ENCODE measurements at regions of chr6 and their contacts with region 1.

Region 1: GRCh38 chr6:94636780-94637385 is 940.5 kb upstream of the MANEA start:
- DNase-seq: peak; percentile 32
- H3K4me3 ChIP-seq: no peak overlapping the region
- H3K27ac ChIP-seq: no peak overlapping the region
- H3K4me1 ChIP-seq: no peaks in the 10 kb centered on the region
- H3K27me3 ChIP-seq: no peaks in the 10 kb centered on the region
- CTCF ChIP-seq: peak; percentile 50 to 57

Region 2: GRCh38 chr6:94698773-94699172 is 61.9 kb after region 1 on chr6:
- CTCF ChIA-PET with region 1: no interaction called
- dilution Hi-C with region 1: no loop called
- in situ Hi-C with region 1: no loop called
- intact Hi-C with region 1: no loop called
- DNase-seq: no peak
- H3K4me3 ChIP-seq: no peak overlapping the region
- H3K27ac ChIP-seq: no peak overlapping the region
- H3K4me1 ChIP-seq: no peaks in the 10 kb centered on the region
- H3K27me3 ChIP-seq: no peaks in the 10 kb centered on the region
- CTCF ChIP-seq: no peak

Region 3: GRCh38 chr6:95091823-95092436 is 455.0 kb after region 1 on chr6:
- CTCF ChIA-PET with region 1: no interaction called
- dilution Hi-C with region 1: no loop called
- in situ Hi-C with region 1: no loop called
- intact Hi-C with region 1: loop called (anchors 1 kb)
- DNase-seq: peak; percentile 48
- H3K4me3 ChIP-seq: no peak overlapping the region
- H3K27ac ChIP-seq: peak overlapping the region; percentile 50
- H3K4me1 ChIP-seq: peaks cover 31% of the 10 kb centered on the region
- H3K27me3 ChIP-seq: no peaks in the 10 kb centered on the region
- CTCF ChIP-seq: peak; percentile 58 to 59

Region 4: DNA sequence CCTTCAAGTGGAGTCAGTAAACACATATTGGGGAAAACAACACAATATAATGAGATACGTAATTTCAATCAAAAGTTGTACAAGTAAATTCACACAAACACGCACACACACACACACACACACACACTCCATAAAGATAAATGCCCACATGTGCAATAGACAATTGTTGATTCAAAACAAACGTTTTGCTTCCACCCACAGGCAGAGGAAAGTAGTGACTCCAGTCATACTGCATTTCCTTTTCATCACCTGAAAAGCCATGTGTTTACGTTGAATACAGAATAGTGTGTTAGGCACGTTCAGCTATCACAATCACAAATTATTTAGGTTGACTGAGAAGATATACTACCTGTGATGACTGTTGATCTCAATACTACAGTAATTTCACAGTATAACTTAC is 496.7 kb after region 1 on chr6:
- CTCF ChIA-PET with region 1: no interaction called
- dilution Hi-C with region 1: no loop called
- in situ Hi-C with region 1: no loop called
- intact Hi-C with region 1: loop called (anchors 1 kb)
- DNase-seq: peak; percentile 51
- H3K4me3 ChIP-seq: no peak overlapping the region
- H3K27ac ChIP-seq: no peak overlapping the region
- H3K4me1 ChIP-seq: no peaks in the 10 kb centered on the region
- H3K27me3 ChIP-seq: no peaks in the 10 kb centered on the region
- CTCF ChIP-seq: peak; percentile 57 to 69

Region 5: GRCh38 chr6:95203153-95203754 is 566.4 kb after region 1 on chr6:
- CTCF ChIA-PET with region 1: no interaction called
- dilution Hi-C with region 1: no loop called
- in situ Hi-C with region 1: no loop called
- intact Hi-C with region 1: loop called (anchors 5 kb)
- DNase-seq: peak; percentile 19
- H3K4me3 ChIP-seq: no peak overlapping the region
- H3K27ac ChIP-seq: no peak overlapping the region
- H3K4me1 ChIP-seq: no peaks in the 10 kb centered on the region
- H3K27me3 ChIP-seq: no peaks in the 10 kb centered on the region
- CTCF ChIP-seq: peak; percentile 66 to 80

Region 6: DNA sequence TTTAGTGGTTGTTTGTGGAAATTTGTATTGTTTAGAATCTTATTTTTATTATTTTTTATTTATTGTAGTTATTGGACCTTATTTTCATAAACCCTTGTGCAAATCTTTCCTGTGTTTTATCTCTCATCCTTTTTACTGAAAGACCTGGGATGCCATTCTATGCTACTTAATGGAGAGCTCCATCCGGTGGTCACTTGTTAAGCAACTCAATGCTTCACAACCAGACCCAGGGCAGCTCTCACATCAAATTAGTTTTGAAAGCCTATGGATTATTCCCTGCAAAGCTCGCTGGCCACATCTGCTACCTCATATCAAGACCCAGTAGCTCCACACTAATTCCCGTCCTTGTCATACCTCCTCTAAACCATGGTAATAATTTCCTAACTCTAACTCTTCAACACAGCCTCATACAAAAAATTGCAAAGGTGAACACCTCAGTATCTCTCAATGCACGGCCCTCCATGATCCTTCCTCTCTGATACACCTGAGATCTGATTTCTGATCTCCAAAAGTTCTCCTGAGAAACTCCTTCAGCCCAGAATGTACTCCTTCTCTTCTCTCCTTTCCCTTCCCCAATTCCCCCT is 643.9 kb after region 1 on chr6:
- CTCF ChIA-PET with region 1: no interaction called
- dilution Hi-C with region 1: no loop called
- in situ Hi-C with region 1: no loop called
- intact Hi-C with region 1: loop called (anchors 1 kb)
- DNase-seq: no peak
- H3K4me3 ChIP-seq: no peak overlapping the region
- H3K27ac ChIP-seq: no peak overlapping the region
- H3K4me1 ChIP-seq: no peaks in the 10 kb centered on the region
- H3K27me3 ChIP-seq: peaks cover 3% of the 10 kb centered on the region
- CTCF ChIP-seq: peak; percentile 39 to 73